Heart left ventricle (tissue), 16 donors: ENCODE measurements at regions of chr15 and their contacts with region 1.

Region 1: GRCh38 chr15:77538027-77538451 is 94.7 kb downstream of the LINGO1 start:
- DNase-seq: peak in 1 of 5 donors; percentile 27
- ATAC-seq: no peak
- H3K4me3 ChIP-seq: no peak overlapping the region
- H3K27ac ChIP-seq: peak overlapping the region in 3 of 12 donors; percentile 25 to 30 (median 30)
- H3K4me1 ChIP-seq: peaks cover 4 to 47% (median 38%) of the 10 kb centered on the region in 12 donors
- H3K27me3 ChIP-seq: no peaks in the 10 kb centered on the region
- CTCF ChIP-seq: no peak
- POLR2A ChIP-seq: no peak

Region 2: GRCh38 chr15:77482570-77482969 is 55.5 kb before region 1 on chr15:
- intact Hi-C with region 1: no loop called
- DNase-seq: no peak
- ATAC-seq: peak in 2 of 4 donors; percentile 41 to 45
- H3K4me3 ChIP-seq: no peak overlapping the region
- H3K27ac ChIP-seq: peak overlapping the region in 11 of 12 donors; percentile 4 to 78 (median 46)
- H3K4me1 ChIP-seq: peaks cover 0 to 65% (median 42%) of the 10 kb centered on the region in 12 donors
- H3K27me3 ChIP-seq: no peaks in the 10 kb centered on the region
- CTCF ChIP-seq: no peak
- POLR2A ChIP-seq: no peak

Region 3: GRCh38 chr15:77507911-77508310 is 30.1 kb before region 1 on chr15:
- intact Hi-C with region 1: loop called in 5 of 10 experiments (anchors 2 to 5 kb)
- DNase-seq: peak in 4 of 5 donors; percentile 81 to 86 (median 82)
- ATAC-seq: peak; percentile 90 to 93 (median 92)
- H3K4me3 ChIP-seq: peak overlapping the region in 3 of 12 donors; percentile 13 to 24 (median 21)
- H3K27ac ChIP-seq: peak overlapping the region; percentile 86 to 98 (median 94)
- H3K4me1 ChIP-seq: peaks cover 12 to 87% (median 63%) of the 10 kb centered on the region in 12 donors
- H3K27me3 ChIP-seq: no peaks in the 10 kb centered on the region
- CTCF ChIP-seq: no peak
- POLR2A ChIP-seq: peak; percentile 29 to 46

Region 4: GRCh38 chr15:77516076-77516475 is 22.0 kb before region 1 on chr15:
- intact Hi-C with region 1: loop called in 1 of 10 experiments (anchors 1 kb)
- DNase-seq: no peak
- ATAC-seq: no peak
- H3K4me3 ChIP-seq: no peak overlapping the region
- H3K27ac ChIP-seq: no peak overlapping the region
- H3K4me1 ChIP-seq: peaks cover 0 to 14% (median 3%) of the 10 kb centered on the region in 12 donors
- H3K27me3 ChIP-seq: no peaks in the 10 kb centered on the region
- CTCF ChIP-seq: no peak
- POLR2A ChIP-seq: no peak